ENCODE measurements at regions of chr9 and their contacts with region 1.

Region 1: GRCh38 chr9:38392235-38393127 is at the start of gene ALDH1B1:
- DNase-seq: peak; percentile 93
- ATAC-seq: peak; percentile 100
- total RNA-seq, gene ALDH1B1: 18.4 TPM

Region 2: GRCh38 chr9:37784616-37785483 is 607.6 kb before region 1 on chr9 and contains the start of gene EXOSC3:
- intact Hi-C with region 1: loop called (anchors 10 kb)
- DNase-seq: peak; percentile 95
- ATAC-seq: peak; percentile 96
- total RNA-seq, gene EXOSC3: 17.0 TPM

Region 3: GRCh38 chr9:38362852-38363593 is 29.5 kb before region 1 on chr9:
- intact Hi-C with region 1: no loop called
- DNase-seq: no peak
- ATAC-seq: peak; percentile 78